IMR-90 (cell line): ENCODE measurements at regions of chr4 and their contacts with region 1.

Region 1: GRCh38 chr4:159102622-159103383 is at the start of gene RAPGEF2:
- DNase-seq: peak; percentile 91
- ATAC-seq: peak; percentile 87
- H3K4me3 ChIP-seq: peak within 1 kb of the TSS; percentile 88
- H3K27ac ChIP-seq: peak within 1 kb of the TSS; percentile 40
- H3K4me1 ChIP-seq: peaks cover 2% of the 10 kb centered on the region
- H3K27me3 ChIP-seq: peaks cover 14% of the 10 kb centered on the region
- CTCF ChIP-seq: no peak
- POLR2A ChIP-seq: peak; percentile 93
- RAD21 ChIP-seq: peak; percentile 12; the same call in 1 of the 2 replicates
- total RNA-seq, gene RAPGEF2: 109 and 126 TPM in 2 replicates

Region 2: GRCh38 chr4:158809611-158810486 is 293.0 kb before region 1 on chr4:
- CTCF ChIA-PET with region 1: no interaction called
- POLR2A ChIA-PET with region 1: no interaction called
- dilution Hi-C with region 1: no loop called
- in situ Hi-C with region 1: no loop called
- intact Hi-C with region 1: no loop called
- DNase-seq: peak; percentile 90
- ATAC-seq: peak; percentile 35
- H3K4me3 ChIP-seq: peak overlapping the region; percentile 33; the same call in 1 of the 2 replicates
- H3K27ac ChIP-seq: no peak overlapping the region
- H3K4me1 ChIP-seq: peaks cover 10% of the 10 kb centered on the region
- H3K27me3 ChIP-seq: no peaks in the 10 kb centered on the region
- CTCF ChIP-seq: no peak
- POLR2A ChIP-seq: no peak; the same call in 1 of the 2 replicates
- RAD21 ChIP-seq: no peak

Region 3: DNA sequence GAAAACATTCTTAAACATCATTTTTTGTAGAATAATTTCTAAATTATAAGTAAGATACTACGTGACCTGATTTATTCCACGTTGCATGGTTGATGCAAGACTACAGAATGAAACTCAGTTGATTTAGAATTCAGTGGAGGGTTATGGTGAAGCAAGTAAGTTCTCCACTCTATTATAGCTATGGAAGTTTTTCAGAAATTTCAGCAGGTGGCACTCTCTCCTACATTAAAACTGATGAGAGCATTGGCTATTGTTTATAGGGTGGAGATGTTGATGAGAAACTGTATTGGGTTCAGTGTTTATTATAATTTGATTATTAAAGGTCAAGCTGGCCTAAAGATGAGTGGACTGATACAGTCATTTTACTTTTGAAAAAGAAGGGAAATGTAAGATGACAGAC is 246.0 kb before region 1 on chr4:
- CTCF ChIA-PET with region 1: no interaction called
- POLR2A ChIA-PET with region 1: no interaction called
- dilution Hi-C with region 1: no loop called
- in situ Hi-C with region 1: no loop called
- intact Hi-C with region 1: loop called (anchors 2 kb)
- DNase-seq: peak; percentile 68
- ATAC-seq: peak; percentile 92
- H3K4me3 ChIP-seq: no peak overlapping the region
- H3K27ac ChIP-seq: no peak overlapping the region
- H3K4me1 ChIP-seq: no peaks in the 10 kb centered on the region
- H3K27me3 ChIP-seq: no peaks in the 10 kb centered on the region
- CTCF ChIP-seq: peak; percentile 73
- POLR2A ChIP-seq: no peak
- RAD21 ChIP-seq: peak; percentile 79

Region 4: GRCh38 chr4:158873795-158874401 is 228.9 kb before region 1 on chr4:
- CTCF ChIA-PET with region 1: no interaction called
- POLR2A ChIA-PET with region 1: no interaction called
- dilution Hi-C with region 1: no loop called
- in situ Hi-C with region 1: no loop called
- intact Hi-C with region 1: loop called (anchors 2 kb)
- DNase-seq: peak; percentile 96
- ATAC-seq: peak; percentile 97
- H3K4me3 ChIP-seq: no peak overlapping the region
- H3K27ac ChIP-seq: no peak overlapping the region
- H3K4me1 ChIP-seq: peaks cover 10% of the 10 kb centered on the region
- H3K27me3 ChIP-seq: no peaks in the 10 kb centered on the region
- CTCF ChIP-seq: no peak
- POLR2A ChIP-seq: no peak
- RAD21 ChIP-seq: no peak; the same call in 1 of the 2 replicates

Region 5: GRCh38 chr4:159142241-159142640 is 39.4 kb after region 1 on chr4:
- CTCF ChIA-PET with region 1: no interaction called
- POLR2A ChIA-PET with region 1: no interaction called
- dilution Hi-C with region 1: no loop called
- in situ Hi-C with region 1: no loop called
- intact Hi-C with region 1: loop called (anchors 5 kb)
- DNase-seq: peak; percentile 64
- ATAC-seq: no peak
- H3K4me3 ChIP-seq: no peak overlapping the region
- H3K27ac ChIP-seq: no peak overlapping the region
- H3K4me1 ChIP-seq: peaks cover 12% of the 10 kb centered on the region
- H3K27me3 ChIP-seq: no peaks in the 10 kb centered on the region
- CTCF ChIP-seq: no peak
- POLR2A ChIP-seq: no peak
- RAD21 ChIP-seq: no peak

Region 6: GRCh38 chr4:159308566-159309340 is 205.9 kb after region 1 on chr4:
- CTCF ChIA-PET with region 1: no interaction called
- POLR2A ChIA-PET with region 1: no interaction called
- dilution Hi-C with region 1: no loop called
- in situ Hi-C with region 1: no loop called
- intact Hi-C with region 1: loop called (anchors 5 kb)
- DNase-seq: peak; percentile 62
- ATAC-seq: peak; percentile 83
- H3K4me3 ChIP-seq: no peak overlapping the region
- H3K27ac ChIP-seq: peak overlapping the region; percentile 65
- H3K4me1 ChIP-seq: peaks cover 5% of the 10 kb centered on the region; the same call in 1 of the 2 replicates
- H3K27me3 ChIP-seq: no peaks in the 10 kb centered on the region
- CTCF ChIP-seq: no peak
- POLR2A ChIP-seq: no peak
- RAD21 ChIP-seq: no peak